AG04449 (cell line): ENCODE measurements at regions of chr1 and their contacts with region 1.

Region 1: GRCh38 chr1:156319664-156320063 is 18.4 kb downstream of the CCT3 start:
- DNase-seq: no peak
- H3K4me3 ChIP-seq: no peak overlapping the region
- CTCF ChIP-seq: peak; percentile 23

Region 2: DNA sequence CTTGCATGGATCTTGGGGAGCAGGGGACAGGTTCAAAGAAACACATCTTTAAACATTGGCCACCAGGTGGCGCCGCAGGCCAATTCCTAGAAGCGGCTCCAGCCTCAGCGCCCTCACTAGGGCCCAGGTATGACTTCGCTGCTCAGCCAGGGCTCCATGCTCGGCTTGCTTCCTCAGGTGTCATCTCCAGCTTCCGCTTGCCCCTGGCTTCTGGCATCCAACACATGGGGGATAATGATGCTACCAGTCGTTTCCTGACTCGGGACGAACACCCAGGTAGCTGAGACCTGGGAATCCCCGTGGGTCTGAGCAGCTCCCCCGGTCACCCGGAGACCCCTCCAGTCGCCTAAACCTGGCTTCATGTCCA is 228.9 kb before region 1 on chr1:
- CTCF ChIA-PET with region 1: interaction called, 17 read pairs
- POLR2A ChIA-PET with region 1: no interaction called
- DNase-seq: no peak
- H3K4me3 ChIP-seq: no peak overlapping the region
- CTCF ChIP-seq: peak; percentile 72

Region 3: DNA sequence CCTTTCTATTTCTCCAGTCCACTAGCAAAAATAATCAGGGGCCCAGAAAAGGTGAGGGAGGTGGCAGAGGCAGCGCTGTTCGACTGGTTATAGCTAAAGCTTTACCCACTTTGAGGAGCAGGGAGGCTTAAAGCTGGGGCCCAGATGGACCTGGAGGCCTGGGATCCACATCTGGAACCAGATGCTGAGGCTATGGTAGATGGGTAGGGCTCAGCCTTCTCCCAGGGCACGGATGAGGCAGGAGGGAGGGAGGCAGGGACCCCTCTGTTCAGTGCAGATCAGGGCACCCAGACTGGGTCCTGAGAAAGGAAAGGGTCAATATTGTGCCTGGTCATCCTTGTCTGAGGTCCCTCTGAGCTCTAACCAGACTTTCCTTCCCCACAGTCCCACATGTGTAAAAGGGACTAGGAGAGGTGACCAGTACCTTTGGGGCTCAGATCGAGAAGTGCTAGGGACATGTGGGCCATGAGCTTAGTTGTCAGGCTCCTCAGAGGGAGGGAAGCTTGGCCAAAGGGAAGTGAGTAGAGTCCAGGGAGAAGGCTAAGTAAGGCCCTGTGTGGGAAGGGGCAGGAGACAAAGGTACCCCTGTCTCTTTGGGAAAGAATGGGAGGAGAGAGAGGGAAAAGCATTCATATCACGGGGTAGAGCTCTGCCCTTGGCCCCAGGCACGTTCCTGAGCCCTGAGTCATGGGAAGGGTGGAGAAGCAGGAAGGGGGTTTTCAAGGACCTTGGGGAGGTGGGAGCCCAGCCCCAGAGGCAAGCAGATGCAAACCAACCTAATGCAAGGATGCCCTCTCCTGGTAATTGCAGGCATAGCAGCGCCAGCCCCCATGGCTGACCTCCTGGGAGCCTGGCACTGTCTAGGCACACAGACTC is 189.7 kb before region 1 on chr1:
- CTCF ChIA-PET with region 1: interaction called, 16 read pairs
- POLR2A ChIA-PET with region 1: no interaction called
- DNase-seq: peak; percentile 80
- H3K4me3 ChIP-seq: peak overlapping the region; percentile 26
- CTCF ChIP-seq: peak; percentile 96

Region 4: GRCh38 chr1:156146020-156146768 is 173.5 kb before region 1 on chr1:
- CTCF ChIA-PET with region 1: interaction called, 16 read pairs
- POLR2A ChIA-PET with region 1: no interaction called
- DNase-seq: peak; percentile 85
- H3K4me3 ChIP-seq: no peak overlapping the region
- CTCF ChIP-seq: peak; percentile 53

Region 5: DNA sequence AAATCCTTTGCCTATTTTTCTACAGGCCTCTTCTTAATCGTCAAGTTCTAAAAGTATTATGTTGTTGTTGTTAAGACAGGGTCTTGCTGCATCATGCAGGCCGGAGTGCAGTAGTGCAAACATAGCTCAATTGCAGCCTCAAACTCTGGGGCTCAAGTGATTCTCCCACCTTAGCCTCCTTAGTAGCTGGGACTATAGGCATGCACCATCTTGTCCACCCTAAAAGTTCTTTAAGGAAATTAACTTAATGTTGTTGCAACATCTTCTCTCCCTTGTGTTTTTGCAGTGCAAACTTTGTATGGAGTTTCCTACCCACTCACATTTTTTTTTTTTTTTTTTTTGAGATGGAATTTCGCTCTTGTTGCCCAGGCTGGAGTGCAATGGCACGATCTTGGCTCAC is 16.4 kb before region 1 on chr1:
- CTCF ChIA-PET with region 1: interaction called, 49 read pairs
- POLR2A ChIA-PET with region 1: no interaction called
- DNase-seq: no peak
- H3K4me3 ChIP-seq: no peak overlapping the region
- CTCF ChIP-seq: no peak

Region 6: GRCh38 chr1:156338180-156338973 is 18.7 kb after region 1 on chr1 and contains the starts of genes CCT3 and TSACC:
- CTCF ChIA-PET with region 1: interaction called, 78 read pairs
- POLR2A ChIA-PET with region 1: interaction called, 3 read pairs
- DNase-seq: peak; percentile 99
- H3K4me3 ChIP-seq: peak within 1 kb of the TSS; percentile 97
- CTCF ChIP-seq: no peak